OCI-LY7 (cell line): ENCODE measurements at regions of chr12 and their contacts with region 1.

Region 1: DNA sequence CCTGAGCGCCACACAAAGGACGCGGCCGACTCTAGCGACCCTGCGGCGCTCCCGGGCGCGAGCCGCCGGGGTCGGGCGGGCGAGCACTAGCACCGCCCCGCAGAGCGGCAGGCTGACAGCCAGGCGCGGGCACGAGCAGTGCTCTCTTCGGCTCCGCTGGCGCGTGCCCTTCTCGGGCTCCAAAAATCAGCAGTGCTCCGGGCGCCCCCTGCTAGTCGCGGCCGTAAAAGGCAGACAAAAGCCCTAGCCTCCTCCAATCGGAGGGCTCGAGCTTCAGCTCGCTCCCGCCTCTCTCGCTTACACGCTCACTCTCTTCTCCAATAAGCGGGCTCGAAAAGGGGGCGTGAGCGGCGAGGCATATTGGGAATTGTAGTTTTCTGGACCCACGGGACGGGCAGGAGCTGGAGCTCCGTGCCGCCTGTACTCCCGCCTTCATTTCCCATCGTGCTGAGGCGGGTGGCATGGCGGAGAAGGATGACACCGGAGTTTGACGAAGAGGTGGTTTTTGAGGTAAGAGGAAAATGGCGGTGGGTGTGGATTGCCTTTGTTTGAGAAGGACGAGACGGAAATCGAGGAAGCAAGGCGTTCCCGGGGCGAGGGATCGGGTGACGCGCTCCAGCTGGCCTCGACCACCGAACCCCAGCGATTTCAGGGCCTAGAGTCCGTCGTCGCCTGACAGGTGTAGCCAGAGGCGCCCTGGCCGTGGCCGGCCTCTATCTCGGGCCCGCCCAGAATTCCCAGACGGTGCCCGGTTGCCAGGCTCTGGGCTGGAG is at the starts of genes FGD6 and VEZT:
- DNase-seq: peak; percentile 100
- H3K4me3 ChIP-seq: peak within 1 kb of the TSS; percentile 85
- H3K27ac ChIP-seq: peak within 1 kb of the TSS; percentile 82
- H3K4me1 ChIP-seq: peaks cover 43% of the 10 kb centered on the region
- CTCF ChIP-seq: peak; percentile 76
- total RNA-seq, gene FGD6: 5.6 and 7.3 TPM in 2 replicates
- total RNA-seq, gene VEZT: 52.5 and 57.7 TPM in 2 replicates

Region 2: GRCh38 chr12:94644141-94644979 is 573.2 kb before region 1 on chr12:
- CTCF ChIA-PET with region 1: no interaction called
- POLR2A ChIA-PET with region 1: no interaction called
- intact Hi-C with region 1: no loop called
- DNase-seq: peak; percentile 41
- H3K4me3 ChIP-seq: no peak overlapping the region
- H3K27ac ChIP-seq: no peak overlapping the region
- H3K4me1 ChIP-seq: peaks cover 11% of the 10 kb centered on the region
- CTCF ChIP-seq: no peak

Region 3: GRCh38 chr12:95072900-95073697 is 144.5 kb before region 1 on chr12 and contains the start of gene NR2C1:
- CTCF ChIA-PET with region 1: no interaction called
- POLR2A ChIA-PET with region 1: no interaction called
- intact Hi-C with region 1: loop called (anchors 2 kb)
- DNase-seq: peak; percentile 97
- H3K4me3 ChIP-seq: peak within 1 kb of the TSS; percentile 93
- H3K27ac ChIP-seq: peak within 1 kb of the TSS; percentile 53
- H3K4me1 ChIP-seq: peaks cover 13% of the 10 kb centered on the region
- CTCF ChIP-seq: no peak
- total RNA-seq, gene NR2C1: 37.5 and 43.4 TPM in 2 replicates

Region 4: GRCh38 chr12:95117178-95117599 is 100.4 kb before region 1 on chr12:
- CTCF ChIA-PET with region 1: no interaction called
- POLR2A ChIA-PET with region 1: interaction called, 4 read pairs
- intact Hi-C with region 1: loop called (anchors 1 kb)
- DNase-seq: peak; percentile 89
- H3K4me3 ChIP-seq: no peak overlapping the region
- H3K27ac ChIP-seq: no peak overlapping the region
- H3K4me1 ChIP-seq: peaks cover 8% of the 10 kb centered on the region
- CTCF ChIP-seq: peak; percentile 93

Region 5: DNA sequence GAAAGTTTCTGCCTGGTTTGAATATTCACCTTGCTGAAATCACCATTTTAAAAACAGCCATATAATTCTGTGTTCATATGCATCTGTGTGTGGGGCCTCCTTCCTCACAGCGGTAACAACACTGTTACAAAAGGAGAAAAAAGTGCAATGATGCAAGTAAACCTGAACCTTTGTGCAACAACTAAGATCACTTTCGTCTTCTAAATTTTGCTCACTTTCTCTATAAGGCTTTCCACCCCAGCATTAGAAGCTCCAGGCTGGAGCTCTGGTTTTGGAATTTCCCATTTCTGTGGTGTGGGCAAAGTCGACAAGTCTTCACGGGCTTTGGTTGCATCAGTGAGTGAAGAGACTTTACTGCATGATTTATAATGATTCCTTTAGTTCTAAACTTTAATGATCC is 18.6 kb before region 1 on chr12:
- CTCF ChIA-PET with region 1: no interaction called
- POLR2A ChIA-PET with region 1: interaction called, 44 read pairs
- intact Hi-C with region 1: loop called (anchors 1 kb)
- DNase-seq: no peak
- H3K4me3 ChIP-seq: peak overlapping the region; percentile 16
- H3K27ac ChIP-seq: peak overlapping the region; percentile 16
- H3K4me1 ChIP-seq: peaks cover 78% of the 10 kb centered on the region
- CTCF ChIP-seq: no peak

Region 6: DNA sequence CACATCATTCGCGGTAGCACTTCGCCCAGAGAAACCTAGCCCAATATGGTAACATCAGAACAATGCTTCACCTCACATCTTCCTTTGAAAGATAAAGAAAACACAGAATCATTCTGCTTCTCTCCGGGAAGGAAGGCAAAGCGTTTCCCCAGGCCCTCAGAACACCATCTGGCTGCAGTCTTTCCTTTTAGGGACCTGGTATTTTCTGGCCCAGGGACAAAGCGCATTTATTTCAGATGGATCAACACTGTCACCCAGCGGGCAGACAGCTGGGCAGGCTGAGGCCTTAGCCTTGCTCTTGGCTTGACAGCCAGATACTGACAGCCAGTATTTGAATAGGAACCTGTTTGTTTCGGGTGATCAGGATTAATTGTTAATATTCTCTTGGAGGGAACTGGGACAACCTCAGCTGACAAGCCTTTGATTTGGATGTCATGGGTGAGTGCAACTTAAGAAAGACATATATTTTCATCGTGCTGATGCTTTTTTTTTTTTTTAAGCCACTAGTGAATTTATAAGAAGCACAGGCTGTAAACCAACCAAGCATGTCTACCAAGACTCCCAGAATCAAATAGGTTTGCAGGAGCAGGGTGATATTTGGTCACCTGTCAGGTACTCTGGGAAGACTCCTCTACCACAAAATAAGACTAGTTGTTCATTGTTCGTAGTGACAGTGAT is 119.0 kb after region 1 on chr12:
- CTCF ChIA-PET with region 1: no interaction called
- POLR2A ChIA-PET with region 1: interaction called, 7 read pairs
- intact Hi-C with region 1: loop called (anchors 1 kb)
- DNase-seq: peak; percentile 89
- H3K4me3 ChIP-seq: peak overlapping the region; percentile 59
- H3K27ac ChIP-seq: peak overlapping the region; percentile 68
- H3K4me1 ChIP-seq: peaks cover 80% of the 10 kb centered on the region
- CTCF ChIP-seq: peak; percentile 98